ENCODE measurements at regions of chr6 and their contacts with region 1.

Region 1: GRCh38 chr6:21527731-21528130 is 65.8 kb upstream of the SOX4 start:
- DNase-seq: no peak
- ATAC-seq: no peak
- H3K4me3 ChIP-seq: no peak overlapping the region
- H3K27ac ChIP-seq: no peak overlapping the region
- H3K4me1 ChIP-seq: no peaks in the 10 kb centered on the region
- H3K27me3 ChIP-seq: peaks cover 0 to 3% of the 10 kb centered on the region in 2 experiments; a peak in 2 of 5 replicates
- CTCF ChIP-seq: no peak
- EP300 ChIP-seq: no peak
- POLR2A ChIP-seq: no peak
- RAD21 ChIP-seq: no peak

Region 2: GRCh38 chr6:21199262-21199661 is 328.5 kb before region 1 on chr6:
- CTCF ChIA-PET with region 1: no interaction called
- POLR2A ChIA-PET with region 1: no interaction called
- in situ Hi-C with region 1: no loop called
- intact Hi-C with region 1: no loop called
- DNase-seq: no peak
- ATAC-seq: no peak
- H3K4me3 ChIP-seq: no peak overlapping the region
- H3K27ac ChIP-seq: no peak overlapping the region
- H3K4me1 ChIP-seq: peaks cover 13% of the 10 kb centered on the region
- H3K27me3 ChIP-seq: no peaks in the 10 kb centered on the region
- CTCF ChIP-seq: no peak
- EP300 ChIP-seq: no peak
- POLR2A ChIP-seq: no peak
- RAD21 ChIP-seq: no peak

Region 3: DNA sequence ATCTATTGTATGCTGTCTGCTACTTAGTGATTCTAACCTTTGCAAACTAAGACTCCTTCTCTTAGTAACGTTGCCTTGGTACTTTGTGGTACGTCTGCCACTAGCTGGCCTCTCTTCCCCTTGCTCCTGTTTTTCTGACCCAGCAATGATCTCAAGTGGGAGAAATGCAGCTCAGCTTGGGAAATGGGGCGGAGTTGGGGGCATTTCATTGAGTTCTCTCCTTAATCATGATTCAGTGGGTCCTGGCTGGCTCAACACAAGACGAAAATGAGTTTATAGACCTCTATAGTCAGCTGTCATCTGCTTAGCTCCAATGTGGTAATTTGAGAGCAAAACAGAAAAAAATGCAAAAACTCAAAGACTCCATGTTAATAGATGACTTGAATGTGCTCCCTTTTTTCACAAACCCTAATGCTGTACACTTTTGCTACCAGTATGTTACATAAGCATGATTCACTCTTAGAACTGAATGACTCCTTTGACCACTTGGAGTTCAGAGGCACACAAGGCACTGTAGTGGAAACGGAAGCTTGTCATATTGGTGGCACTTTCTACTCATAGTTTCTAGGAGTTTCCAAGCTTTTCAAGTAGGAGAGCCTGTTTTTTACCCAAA is 10.6 kb after region 1 on chr6:
- CTCF ChIA-PET with region 1: no interaction called
- POLR2A ChIA-PET with region 1: no interaction called
- in situ Hi-C with region 1: no loop called
- intact Hi-C with region 1: loop called (anchors 1 kb)
- DNase-seq: peak; percentile 64
- ATAC-seq: peak; percentile 90
- H3K4me3 ChIP-seq: no peak overlapping the region; a peak in 1 of 6 replicates
- H3K27ac ChIP-seq: no peak overlapping the region
- H3K4me1 ChIP-seq: peaks cover 12% of the 10 kb centered on the region
- H3K27me3 ChIP-seq: no peaks in the 10 kb centered on the region; a peak in 1 of 5 replicates
- CTCF ChIP-seq: no peak
- EP300 ChIP-seq: no peak
- POLR2A ChIP-seq: no peak
- RAD21 ChIP-seq: no peak